Activated T-helper 2 cell treated with anti-CD3 and anti-CD28 coated beads, Interferon-gamma antibody, Interleukin-2, Interleukin-4, amounts not matched to agents 10 μg/mL and 5 μg/mL and 100 μg/mL, durations not matched to agents 14 hours and 24 hours and 36 hours (primary cell): ENCODE measurements at regions of chr7 and their contacts with region 1.

Region 1: DNA sequence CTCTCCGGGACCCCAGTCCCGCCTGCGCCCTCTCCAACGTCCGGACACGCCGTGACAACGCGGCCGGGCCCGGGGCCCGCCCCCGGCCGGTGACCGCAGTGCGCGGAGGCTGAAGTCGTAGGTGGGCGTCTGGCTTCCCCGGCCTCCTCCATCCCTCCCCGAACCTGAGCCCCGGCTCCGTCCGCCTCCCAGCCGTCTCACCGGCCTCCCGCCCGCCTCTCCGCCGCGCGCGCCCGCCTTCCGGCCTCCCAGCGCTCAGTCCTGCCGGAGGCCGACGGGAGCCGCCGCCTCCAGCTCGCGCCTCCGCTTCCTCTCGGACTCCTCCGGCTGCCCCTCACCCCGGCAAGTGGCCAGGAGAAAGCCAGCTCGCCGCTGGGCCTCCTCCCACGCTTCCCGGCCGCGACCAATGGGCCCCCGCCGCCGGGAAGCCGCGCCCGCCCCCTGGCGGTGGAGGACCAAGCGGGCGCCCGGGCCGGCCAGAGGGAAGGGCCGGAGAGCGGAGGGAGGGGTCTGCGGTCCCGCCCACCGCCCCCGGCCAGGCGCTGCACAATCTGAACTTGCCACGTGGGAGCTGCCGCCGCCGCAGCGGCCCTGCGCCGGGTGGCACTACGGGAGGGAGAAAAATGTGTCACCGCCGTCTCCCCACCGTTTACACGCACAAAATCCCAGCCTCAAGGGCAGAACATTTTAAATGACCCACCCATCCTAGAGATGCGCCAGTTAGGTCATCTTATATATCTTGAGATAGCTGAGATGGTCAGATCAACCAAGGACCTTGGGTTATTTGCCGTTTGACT is at the start of gene FAM3C:
- DNase-seq: peak; percentile 78
- H3K4me3 Mint-ChIP-seq: peak within 1 kb of the TSS; percentile 88
- H3K27ac Mint-ChIP-seq: peak within 1 kb of the TSS; percentile 91
- H3K4me1 Mint-ChIP-seq: peaks cover 34% of the 10 kb centered on the region
- H3K27me3 Mint-ChIP-seq: no peaks in the 10 kb centered on the region
- total RNA-seq, gene FAM3C: 57.6 and 59.5 TPM in 2 replicates

Region 2: DNA sequence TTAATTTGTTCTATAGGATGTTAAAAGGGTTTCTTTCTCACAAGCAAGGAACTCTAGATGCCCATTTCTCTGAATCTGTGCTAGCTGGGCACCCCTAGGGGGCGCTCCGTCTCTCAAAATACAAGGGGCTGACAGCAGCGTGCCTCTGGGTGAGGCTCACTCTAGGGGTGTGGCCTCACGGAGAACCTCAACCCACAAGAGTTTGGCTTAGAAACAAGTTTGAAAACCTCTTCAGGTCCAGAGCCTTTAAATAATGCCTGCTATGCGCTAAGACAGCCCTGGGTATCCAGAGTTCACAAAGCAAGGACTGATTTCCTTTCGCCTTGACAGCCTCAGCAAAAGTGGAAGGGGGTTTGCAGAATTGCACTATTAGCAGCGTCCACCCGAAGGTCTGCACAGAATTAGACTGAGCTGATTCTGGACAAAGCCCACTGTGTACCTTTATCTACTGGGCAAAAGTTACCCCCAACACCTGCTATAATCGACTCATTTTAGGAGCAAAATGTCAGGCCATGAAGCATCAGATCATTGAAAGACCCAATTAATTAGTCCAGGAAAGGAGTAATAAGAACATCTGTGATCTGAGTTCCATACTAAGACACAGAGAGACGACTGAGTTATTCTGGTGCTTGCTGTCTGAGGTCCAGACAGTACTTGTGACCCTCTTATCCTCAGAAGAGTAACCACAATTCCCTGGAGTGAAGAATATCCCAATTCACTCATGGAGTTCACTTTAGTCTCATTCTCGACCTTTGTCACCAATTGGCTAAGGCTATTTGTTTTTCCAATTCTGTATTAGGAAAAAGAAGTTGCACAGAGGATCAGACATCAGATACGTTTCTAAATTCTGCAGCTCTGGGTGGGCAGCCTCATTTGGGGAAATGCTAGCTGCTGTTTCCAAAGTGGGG is 408.2 kb before region 1 on chr7:
- intact Hi-C with region 1: loop called (anchors 10 kb)
- DNase-seq: peak; percentile 81
- H3K4me3 Mint-ChIP-seq: peak overlapping the region; percentile 78
- H3K27ac Mint-ChIP-seq: no peak overlapping the region
- H3K4me1 Mint-ChIP-seq: peaks cover 21% of the 10 kb centered on the region
- H3K27me3 Mint-ChIP-seq: peaks cover 41% of the 10 kb centered on the region

Region 3: GRCh38 chr7:121366852-121367431 is 29.2 kb before region 1 on chr7:
- intact Hi-C with region 1: loop called (anchors 1 kb)
- DNase-seq: no peak
- H3K4me3 Mint-ChIP-seq: no peak overlapping the region
- H3K27ac Mint-ChIP-seq: no peak overlapping the region
- H3K4me1 Mint-ChIP-seq: peaks cover 36% of the 10 kb centered on the region
- H3K27me3 Mint-ChIP-seq: no peaks in the 10 kb centered on the region

Region 4: DNA sequence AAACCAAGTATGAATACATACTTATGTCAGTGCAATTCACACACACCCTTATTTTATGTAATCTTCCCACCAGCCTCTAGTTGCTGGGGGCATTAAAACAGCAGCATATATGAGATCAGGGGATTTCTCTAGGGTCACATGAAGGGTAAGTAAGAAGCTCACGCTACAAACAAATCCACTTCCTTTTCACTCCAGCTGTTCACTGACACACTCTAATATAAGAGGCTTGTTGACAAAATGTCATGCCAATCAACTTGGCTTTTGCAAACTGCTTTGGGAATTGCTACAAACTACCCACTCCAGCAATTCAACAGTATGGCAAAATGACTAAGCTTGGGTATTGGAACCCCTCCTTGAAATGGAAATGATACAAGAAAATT is 10.4 kb before region 1 on chr7:
- intact Hi-C with region 1: loop called (anchors 1 kb)
- DNase-seq: no peak
- H3K4me3 Mint-ChIP-seq: no peak overlapping the region
- H3K27ac Mint-ChIP-seq: no peak overlapping the region
- H3K4me1 Mint-ChIP-seq: peaks cover 70% of the 10 kb centered on the region
- H3K27me3 Mint-ChIP-seq: no peaks in the 10 kb centered on the region

Region 5: GRCh38 chr7:121500360-121501058 is 104.3 kb after region 1 on chr7:
- intact Hi-C with region 1: loop called (anchors 1 kb)
- DNase-seq: no peak
- H3K4me3 Mint-ChIP-seq: no peak overlapping the region
- H3K27ac Mint-ChIP-seq: peak overlapping the region; percentile 86
- H3K4me1 Mint-ChIP-seq: peaks cover 25% of the 10 kb centered on the region
- H3K27me3 Mint-ChIP-seq: no peaks in the 10 kb centered on the region

Region 6: GRCh38 chr7:121547544-121548092 is 151.5 kb after region 1 on chr7:
- intact Hi-C with region 1: loop called (anchors 1 kb)
- DNase-seq: no peak
- H3K4me3 Mint-ChIP-seq: no peak overlapping the region
- H3K27ac Mint-ChIP-seq: no peak overlapping the region
- H3K4me1 Mint-ChIP-seq: peaks cover 38% of the 10 kb centered on the region
- H3K27me3 Mint-ChIP-seq: peaks cover 4% of the 10 kb centered on the region